ENCODE measurements at regions of chrX and their contacts with region 1.

Region 1: GRCh38 chrX:43958529-43958928 is 14.7 kb downstream of the NDP start:
- DNase-seq: peak; percentile 92
- H3K4me3 ChIP-seq: no peak overlapping the region
- H3K27ac ChIP-seq: no peak overlapping the region
- H3K4me1 ChIP-seq: no peaks in the 10 kb centered on the region
- H3K27me3 ChIP-seq: no peaks in the 10 kb centered on the region
- CTCF ChIP-seq: peak; percentile 82

Region 2: GRCh38 chrX:44238206-44238605 is 279.7 kb after region 1 on chrX:
- CTCF ChIA-PET with region 1: interaction called, 23 read pairs
- POLR2A ChIA-PET with region 1: no interaction called
- intact Hi-C with region 1: no loop called
- DNase-seq: no peak
- H3K4me3 ChIP-seq: no peak overlapping the region
- H3K27ac ChIP-seq: no peak overlapping the region
- H3K4me1 ChIP-seq: no peaks in the 10 kb centered on the region
- H3K27me3 ChIP-seq: no peaks in the 10 kb centered on the region
- CTCF ChIP-seq: peak; percentile 36

Region 3: GRCh38 chrX:44244008-44244407 is 285.5 kb after region 1 on chrX:
- CTCF ChIA-PET with region 1: interaction called, 23 read pairs
- POLR2A ChIA-PET with region 1: no interaction called
- intact Hi-C with region 1: loop called (anchors 1 kb)
- DNase-seq: peak; percentile 72
- H3K4me3 ChIP-seq: no peak overlapping the region
- H3K27ac ChIP-seq: no peak overlapping the region
- H3K4me1 ChIP-seq: no peaks in the 10 kb centered on the region
- H3K27me3 ChIP-seq: no peaks in the 10 kb centered on the region
- CTCF ChIP-seq: peak; percentile 76

Region 4: GRCh38 chrX:44432641-44433040 is 474.1 kb after region 1 on chrX:
- CTCF ChIA-PET with region 1: no interaction called
- POLR2A ChIA-PET with region 1: no interaction called
- intact Hi-C with region 1: loop called (anchors 10 kb)
- DNase-seq: peak; percentile 35
- H3K4me3 ChIP-seq: no peak overlapping the region
- H3K27ac ChIP-seq: no peak overlapping the region
- H3K4me1 ChIP-seq: peaks cover 14% of the 10 kb centered on the region
- H3K27me3 ChIP-seq: no peaks in the 10 kb centered on the region
- CTCF ChIP-seq: no peak

Region 5: DNA sequence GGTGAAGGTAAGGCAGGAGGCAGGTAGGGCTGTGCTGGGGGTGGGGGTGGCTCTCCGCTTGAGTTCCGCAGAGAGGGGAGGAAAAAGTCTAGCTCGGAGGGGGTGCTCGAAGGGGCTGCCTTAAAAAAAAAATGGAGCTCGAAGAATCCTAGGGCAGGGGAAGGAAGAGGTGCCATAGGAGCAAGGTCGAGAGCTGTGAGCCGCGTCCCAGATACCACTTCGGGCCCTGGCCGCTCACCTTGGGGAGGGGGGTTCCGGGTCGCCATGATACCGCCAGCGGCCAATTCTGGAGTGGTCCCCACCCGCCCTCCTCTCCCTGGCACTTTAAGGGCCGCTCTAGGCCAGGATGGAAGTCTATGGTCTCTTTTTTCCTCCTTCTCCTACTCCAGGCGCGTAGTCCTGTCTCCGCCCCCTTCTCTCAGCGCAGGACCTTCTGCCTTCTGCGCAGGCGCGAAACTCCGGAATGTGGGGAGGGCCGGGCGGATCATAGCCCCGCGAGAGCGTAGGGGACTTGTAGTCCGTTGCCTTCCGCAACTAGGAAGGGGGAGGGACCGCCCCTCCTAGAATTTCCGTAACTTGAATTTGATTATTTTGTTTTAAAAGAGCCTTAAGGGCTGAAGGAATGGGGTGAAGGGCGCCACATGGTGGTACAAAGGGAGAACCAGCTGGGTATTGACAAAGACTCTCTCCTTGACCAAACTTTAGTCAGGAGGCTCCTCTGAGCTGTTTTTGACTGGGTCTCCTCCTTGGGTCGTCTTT is 584.2 kb after region 1 on chrX and contains the start of gene FUNDC1:
- CTCF ChIA-PET with region 1: no interaction called
- POLR2A ChIA-PET with region 1: no interaction called
- intact Hi-C with region 1: loop called (anchors 2 kb)
- DNase-seq: peak; percentile 99
- H3K4me3 ChIP-seq: peak within 1 kb of the TSS; percentile 65
- H3K27ac ChIP-seq: peak within 1 kb of the TSS; percentile 79
- H3K4me1 ChIP-seq: peaks cover 12% of the 10 kb centered on the region
- H3K27me3 ChIP-seq: no peaks in the 10 kb centered on the region
- CTCF ChIP-seq: peak; percentile 62
- total RNA-seq, gene FUNDC1: 41.0 and 44.2 TPM in 2 replicates